WTC11 (cell line): ENCODE measurements at regions of chr18 and their contacts with region 1.

Region 1: GRCh38 chr18:58043491-58044379 is at the start of gene NEDD4L:
- DNase-seq: peak; percentile 83
- ATAC-seq: peak; percentile 68
- H3K4me3 Mint-ChIP-seq: peak within 1 kb of the TSS; percentile 98
- H3K27ac Mint-ChIP-seq: peak within 1 kb of the TSS; percentile 97
- H3K4me1 Mint-ChIP-seq: peaks cover 28% of the 10 kb centered on the region
- H3K27me3 Mint-ChIP-seq: peaks cover 9% of the 10 kb centered on the region
- CTCF ChIP-seq: peak; percentile 32; the same call in 1 of the 2 replicates
- total RNA-seq, gene NEDD4L: 60.9 to 88.0 TPM (median 69.3 TPM) in 3 replicates

Region 2: DNA sequence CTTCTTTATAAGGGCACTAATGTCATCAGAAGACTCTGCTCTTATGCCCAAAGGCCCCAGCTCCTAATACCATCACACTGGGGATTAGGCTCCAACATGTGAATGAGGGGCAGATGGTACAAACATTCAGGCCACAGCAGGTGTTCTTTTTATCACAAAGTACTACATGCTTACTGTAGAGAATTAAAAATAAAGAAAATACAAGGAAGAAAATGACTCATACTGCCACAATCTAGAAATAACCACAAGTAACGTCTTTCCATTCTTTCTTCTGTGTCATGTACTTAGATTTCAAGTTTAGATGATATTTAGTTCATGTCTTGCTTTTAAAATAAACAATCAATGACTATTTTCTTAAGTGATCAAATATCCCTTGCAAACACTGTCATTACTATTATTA is 100.0 kb before region 1 on chr18:
- CTCF ChIA-PET with region 1: no interaction called
- POLR2A ChIA-PET with region 1: no interaction called
- DNase-seq: no peak
- ATAC-seq: no peak
- H3K4me3 Mint-ChIP-seq: no peak overlapping the region
- H3K27ac Mint-ChIP-seq: no peak overlapping the region
- H3K4me1 Mint-ChIP-seq: peaks cover 22% of the 10 kb centered on the region
- H3K27me3 Mint-ChIP-seq: no peaks in the 10 kb centered on the region; the same call in 1 of the 2 replicates
- CTCF ChIP-seq: no peak

Region 3: GRCh38 chr18:58067601-58068000 is 23.9 kb after region 1 on chr18:
- CTCF ChIA-PET with region 1: interaction called, 10 read pairs
- POLR2A ChIA-PET with region 1: no interaction called
- DNase-seq: no peak
- ATAC-seq: no peak; the same call in 1 of the 2 replicates
- H3K4me3 Mint-ChIP-seq: no peak overlapping the region
- H3K27ac Mint-ChIP-seq: no peak overlapping the region
- H3K4me1 Mint-ChIP-seq: peaks cover 51% of the 10 kb centered on the region
- H3K27me3 Mint-ChIP-seq: no peaks in the 10 kb centered on the region
- CTCF ChIP-seq: no peak

Region 4: GRCh38 chr18:58125183-58125582 is 81.4 kb after region 1 on chr18:
- CTCF ChIA-PET with region 1: interaction called, 90 read pairs
- POLR2A ChIA-PET with region 1: interaction called, 7 read pairs
- DNase-seq: no peak
- ATAC-seq: peak; percentile 50
- H3K4me3 Mint-ChIP-seq: no peak overlapping the region
- H3K27ac Mint-ChIP-seq: no peak overlapping the region; the same call in 1 of the 2 replicates
- H3K4me1 Mint-ChIP-seq: peaks cover 12% of the 10 kb centered on the region
- H3K27me3 Mint-ChIP-seq: no peaks in the 10 kb centered on the region
- CTCF ChIP-seq: no peak

Region 5: DNA sequence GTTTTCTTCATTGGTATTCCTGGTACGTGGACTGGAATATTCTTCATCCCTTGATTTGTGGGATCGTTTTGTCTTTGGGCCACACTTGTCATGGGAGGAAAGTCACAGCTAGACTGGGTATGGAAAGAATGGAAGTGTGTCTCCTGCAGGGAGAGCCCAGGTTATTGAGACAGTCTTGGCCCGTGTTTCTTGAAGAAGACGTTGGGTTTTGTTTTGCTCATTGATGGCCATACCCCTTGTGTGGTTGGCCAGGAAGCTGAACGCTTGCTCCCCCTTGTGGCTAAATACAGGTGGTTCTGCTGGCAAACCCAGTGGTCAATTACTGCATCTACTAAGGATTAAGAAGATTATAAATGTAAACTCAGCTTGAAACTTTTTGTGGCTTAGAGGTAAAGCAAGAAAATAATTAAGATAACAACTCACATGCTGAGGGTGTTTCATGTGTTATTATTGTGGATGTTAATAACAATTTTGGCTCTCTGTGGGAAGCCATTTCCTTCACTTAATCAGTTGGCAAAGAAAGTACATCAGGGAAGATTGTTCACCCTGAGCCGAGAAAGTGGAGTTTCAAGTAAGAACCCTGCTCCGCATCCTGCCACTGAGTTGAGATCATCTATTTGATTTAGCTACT is 92.1 kb after region 1 on chr18:
- CTCF ChIA-PET with region 1: interaction called, 39 read pairs
- POLR2A ChIA-PET with region 1: no interaction called
- DNase-seq: peak; percentile 74
- ATAC-seq: peak; percentile 85
- H3K4me3 Mint-ChIP-seq: no peak overlapping the region
- H3K27ac Mint-ChIP-seq: peak overlapping the region; percentile 85
- H3K4me1 Mint-ChIP-seq: peaks cover 52% of the 10 kb centered on the region
- H3K27me3 Mint-ChIP-seq: no peaks in the 10 kb centered on the region
- CTCF ChIP-seq: peak; percentile 85

Region 6: DNA sequence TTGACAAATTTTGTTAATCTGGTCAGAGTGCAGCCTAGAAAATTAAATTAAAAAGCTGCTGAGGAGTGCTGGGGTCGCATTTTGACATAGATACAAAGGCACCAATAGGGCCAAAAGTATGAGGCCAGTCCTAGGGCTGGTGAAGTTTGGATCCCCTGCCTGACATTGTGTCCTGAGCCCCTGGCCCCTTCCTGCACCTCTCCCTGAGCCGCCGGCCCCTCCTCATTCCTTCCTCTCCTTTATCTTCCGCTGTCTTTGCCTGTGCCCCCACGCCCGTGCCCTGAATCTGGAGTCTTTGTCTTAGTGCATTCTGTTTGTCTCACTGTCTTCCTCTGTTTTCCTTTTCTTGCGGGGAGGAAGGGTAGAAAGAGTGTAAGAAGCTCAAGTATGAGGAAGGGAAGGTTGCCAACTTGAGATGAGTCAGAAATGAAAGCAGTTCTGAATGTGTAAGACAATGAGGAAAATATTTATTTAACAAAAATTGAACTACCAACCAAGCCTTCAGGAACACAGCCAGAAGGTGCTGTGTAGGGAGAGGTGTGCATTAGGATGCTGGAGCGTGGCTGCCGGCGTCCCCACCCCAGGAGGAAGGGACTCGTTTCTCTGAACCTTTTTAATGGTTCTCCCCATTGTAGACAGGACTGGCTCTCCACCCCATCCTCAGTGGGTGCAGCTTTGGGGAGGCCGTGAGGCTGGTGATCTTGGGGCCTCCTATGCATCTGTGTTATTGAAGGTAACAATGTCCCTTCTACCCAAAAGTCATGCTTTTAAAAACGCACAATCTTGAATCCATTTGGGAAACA is 133.4 kb after region 1 on chr18:
- CTCF ChIA-PET with region 1: interaction called, 15 read pairs
- POLR2A ChIA-PET with region 1: no interaction called
- DNase-seq: no peak
- ATAC-seq: no peak
- H3K4me3 Mint-ChIP-seq: no peak overlapping the region
- H3K27ac Mint-ChIP-seq: no peak overlapping the region; the same call in 1 of the 2 replicates
- H3K4me1 Mint-ChIP-seq: peaks cover 66% of the 10 kb centered on the region
- H3K27me3 Mint-ChIP-seq: no peaks in the 10 kb centered on the region
- CTCF ChIP-seq: no peak